ENCODE measurements at regions of chr14 and their contacts with region 1.

Region 1: GRCh38 chr14:49633640-49634546 is 1.2 kb downstream of the DNAAF2 start:
- DNase-seq: peak; percentile 88 to 98
- H3K4me3 ChIP-seq: peak overlapping the region; percentile 85
- CTCF ChIP-seq: no peak
- POLR2A ChIP-seq: peak in 1 of 2 donors; percentile 48

Region 2: DNA sequence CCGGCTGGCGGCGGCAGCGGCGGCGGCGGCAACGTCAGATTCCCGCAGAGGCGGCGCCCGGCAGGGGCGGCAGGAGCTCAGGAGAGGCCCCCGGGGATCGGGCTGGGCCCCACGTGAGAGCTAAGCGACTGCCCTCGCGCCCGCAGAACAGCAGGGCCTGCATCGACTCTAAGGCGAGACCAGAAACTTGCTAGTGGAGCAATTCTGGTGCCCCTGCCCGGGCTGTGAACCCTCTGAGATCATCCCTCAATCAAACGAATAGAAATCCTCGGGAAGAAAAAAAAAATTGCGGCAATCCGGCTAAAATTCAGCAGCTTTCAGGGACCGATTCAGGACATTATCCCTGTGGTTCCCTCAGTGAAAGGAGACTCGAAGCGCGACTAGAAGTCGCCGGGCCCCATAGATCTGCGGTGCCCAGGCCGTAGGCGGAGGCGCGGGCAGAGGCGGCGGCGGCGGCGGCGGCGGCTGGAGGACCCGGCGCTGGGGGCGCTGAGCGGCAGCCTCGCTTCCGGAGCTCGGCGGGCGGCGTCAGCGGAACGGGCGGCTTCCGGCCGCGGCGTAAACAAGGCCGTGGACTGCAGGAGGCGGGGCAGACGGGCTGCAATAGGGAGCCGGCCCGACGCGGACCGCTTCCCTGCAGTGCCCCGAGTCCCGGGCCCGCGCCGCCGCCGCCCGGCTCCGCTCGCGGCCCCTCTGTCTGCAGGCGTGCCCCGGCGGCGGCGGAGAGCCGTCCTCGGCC is 133.8 kb after region 1 on chr14 and contains the start of gene KLHDC2:
- intact Hi-C with region 1: loop called (anchors 10 kb)
- DNase-seq: peak; percentile 82 to 97
- H3K4me3 ChIP-seq: peak within 1 kb of the TSS; percentile 99
- CTCF ChIP-seq: no peak
- POLR2A ChIP-seq: peak in 1 of 2 donors; percentile 87
- total RNA-seq, gene KLHDC2: 58.9 to 89.1 (median 65.2) TPM

Region 3: GRCh38 chr14:49828640-49829039 is 194.7 kb after region 1 on chr14:
- intact Hi-C with region 1: loop called (anchors 5 kb)
- DNase-seq: no peak
- H3K4me3 ChIP-seq: no peak overlapping the region
- CTCF ChIP-seq: no peak
- POLR2A ChIP-seq: no peak

Region 4: GRCh38 chr14:50599700-50600444 is 966.0 kb after region 1 on chr14:
- intact Hi-C with region 1: no loop called
- DNase-seq: no peak
- H3K4me3 ChIP-seq: no peak overlapping the region
- CTCF ChIP-seq: no peak
- POLR2A ChIP-seq: no peak

Measured in lower leg skin (tissue), 4 donors.